WTC11 (cell line): ENCODE measurements at regions of chr15 and their contacts with region 1.

Region 1: GRCh38 chr15:85543741-85544155 is 163.3 kb downstream of the AKAP13 start:
- DNase-seq: peak; percentile 52
- ATAC-seq: peak; percentile 97
- H3K4me3 Mint-ChIP-seq: no peak overlapping the region
- H3K27ac Mint-ChIP-seq: peak overlapping the region; percentile 15
- H3K4me1 Mint-ChIP-seq: peaks cover 22% of the 10 kb centered on the region
- H3K27me3 Mint-ChIP-seq: no peaks in the 10 kb centered on the region
- CTCF ChIP-seq: no peak

Region 2: GRCh38 chr15:85407804-85408746 is 135.7 kb before region 1 on chr15:
- CTCF ChIA-PET with region 1: no interaction called
- POLR2A ChIA-PET with region 1: no interaction called
- DNase-seq: no peak
- ATAC-seq: no peak
- H3K4me3 Mint-ChIP-seq: no peak overlapping the region
- H3K27ac Mint-ChIP-seq: peak overlapping the region; percentile 19; the same call in 1 of the 2 replicates
- H3K4me1 Mint-ChIP-seq: peaks cover 38% of the 10 kb centered on the region
- H3K27me3 Mint-ChIP-seq: no peaks in the 10 kb centered on the region
- CTCF ChIP-seq: no peak

Region 3: GRCh38 chr15:85554852-85555521 is 11.2 kb after region 1 on chr15:
- CTCF ChIA-PET with region 1: interaction called, 17 read pairs
- POLR2A ChIA-PET with region 1: no interaction called
- DNase-seq: no peak
- ATAC-seq: no peak
- H3K4me3 Mint-ChIP-seq: no peak overlapping the region
- H3K27ac Mint-ChIP-seq: no peak overlapping the region
- H3K4me1 Mint-ChIP-seq: peaks cover 33% of the 10 kb centered on the region
- H3K27me3 Mint-ChIP-seq: no peaks in the 10 kb centered on the region
- CTCF ChIP-seq: no peak